ENCODE measurements at regions of chr4 and their contacts with region 1.

Region 1: DNA sequence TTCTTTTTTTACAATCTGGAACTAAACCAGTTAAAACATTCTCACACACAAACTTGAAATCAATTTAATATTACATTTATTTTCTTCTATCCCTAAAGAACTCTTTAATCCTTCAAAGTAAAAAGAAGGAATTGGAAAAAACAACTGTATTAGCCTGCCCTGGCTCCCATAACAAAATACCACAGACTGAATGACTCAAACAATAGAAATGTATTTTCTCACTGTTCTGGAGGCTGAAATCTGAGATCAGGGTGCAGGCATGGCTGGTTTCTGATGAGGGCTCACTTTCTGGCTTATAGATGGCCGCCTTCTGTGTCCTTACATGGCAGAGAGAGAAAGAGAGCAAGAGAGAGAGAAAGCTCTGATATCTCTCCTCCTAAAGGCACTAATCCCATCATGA is 149.4 kb downstream of the PDGFRA start:
- DNase-seq: no peak
- ATAC-seq: no peak
- H3K4me3 ChIP-seq: no peak overlapping the region
- H3K27ac ChIP-seq: no peak overlapping the region
- H3K4me1 ChIP-seq: no peaks in the 10 kb centered on the region
- H3K27me3 ChIP-seq: no peaks in the 10 kb centered on the region
- CTCF ChIP-seq: no peak
- POLR2A ChIP-seq: no peak

Region 2: DNA sequence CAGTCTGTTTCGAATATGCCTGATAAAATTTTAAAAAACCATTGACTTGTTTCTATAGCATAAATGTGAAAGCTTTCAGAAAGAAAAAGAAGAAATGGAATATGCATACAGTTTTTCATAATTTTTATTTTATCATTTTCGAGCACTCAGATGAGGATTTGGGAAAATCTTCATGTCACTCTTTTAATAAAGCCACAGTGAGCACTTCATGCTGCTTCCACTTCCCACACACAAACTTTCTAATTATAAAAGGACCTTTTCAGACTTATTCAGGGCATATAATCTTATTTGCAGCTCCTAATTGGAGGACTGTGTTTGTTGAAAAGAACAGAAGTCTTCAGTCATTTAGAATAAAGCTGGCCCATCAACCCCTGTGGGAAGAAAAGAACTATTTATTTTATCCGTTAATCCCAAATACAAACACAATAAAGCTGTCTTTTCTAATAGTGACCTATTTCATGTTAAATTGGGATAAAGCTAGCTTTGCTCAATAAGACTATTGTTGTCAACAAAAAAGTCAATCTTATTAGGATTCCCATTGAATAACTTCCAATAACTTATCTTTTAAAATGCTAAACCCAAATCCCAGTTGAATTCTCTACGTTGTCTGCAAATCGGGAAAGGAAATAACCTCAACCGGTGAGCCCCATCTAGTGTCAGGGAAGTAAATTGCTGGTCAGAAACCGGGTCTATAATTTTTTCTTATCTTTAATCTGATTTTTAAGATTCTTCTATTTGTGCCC is 62.1 kb after region 1 on chr4:
- in situ Hi-C with region 1: loop called in 1 of 4 experiments (anchors 10 kb)
- intact Hi-C with region 1: no loop called
- DNase-seq: no peak
- ATAC-seq: peak; percentile 57 to 67
- H3K4me3 ChIP-seq: peak overlapping the region; percentile 43 to 65 (median 49)
- H3K27ac ChIP-seq: peak overlapping the region; percentile 45 to 66 (median 55)
- H3K4me1 ChIP-seq: peaks cover 0 to 7% of the 10 kb centered on the region in 2 donors
- H3K27me3 ChIP-seq: no peaks in the 10 kb centered on the region
- CTCF ChIP-seq: peak; percentile 43 to 75 (median 60)
- POLR2A ChIP-seq: no peak

Measured in gastrocnemius medialis (tissue), 4 donors.